HepG2 (cell line): ENCODE measurements at regions of chr7 and their contacts with region 1.

Region 1: DNA sequence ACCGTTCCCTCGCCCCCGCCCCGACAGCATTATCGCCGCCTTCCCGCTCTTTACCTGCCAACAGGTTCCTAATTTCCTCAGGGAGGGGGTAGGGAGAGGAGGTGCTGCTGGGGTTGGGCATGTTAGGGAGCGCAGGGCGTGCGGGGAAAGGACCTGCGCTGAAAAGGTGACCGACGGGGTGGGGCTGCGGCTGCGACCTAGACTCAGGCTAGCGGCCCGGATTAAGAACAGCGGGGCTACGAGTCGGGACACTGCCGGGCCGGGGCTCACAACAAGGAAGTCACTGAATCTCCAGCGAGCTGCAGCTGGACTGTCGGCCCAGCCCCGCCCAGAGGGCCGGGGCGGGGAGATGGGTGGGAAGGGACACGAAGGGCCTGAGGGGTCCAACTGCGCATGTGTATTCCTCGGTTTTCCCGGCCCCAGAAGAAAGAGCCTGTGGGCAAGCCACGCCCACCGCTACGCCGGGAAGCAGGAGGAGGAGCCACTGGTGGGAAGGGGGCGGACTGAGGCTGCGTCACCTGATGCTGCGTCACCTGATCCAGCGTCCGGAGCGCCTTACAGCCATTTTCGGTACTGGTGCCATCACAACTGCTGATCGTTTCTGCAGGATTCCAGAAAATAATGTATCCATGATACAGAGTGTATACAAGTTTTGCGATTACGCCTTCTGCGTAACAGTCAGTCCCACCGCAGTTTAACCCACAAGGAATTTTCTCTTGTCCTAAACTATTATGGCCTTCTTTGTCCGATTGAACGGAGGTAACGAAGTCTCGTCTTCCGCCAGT is at the start of gene SKAP2:
- DNase-seq: peak; percentile 96
- ATAC-seq: peak; percentile 98
- H3K4me3 ChIP-seq: peak within 1 kb of the TSS; percentile 87 to 95 (median 93)
- H3K27ac ChIP-seq: peak within 1 kb of the TSS; percentile 83
- H3K4me1 ChIP-seq: peaks cover 21% of the 10 kb centered on the region
- H3K27me3 ChIP-seq: no peaks in the 10 kb centered on the region; a peak in 1 of 5 replicates
- CTCF ChIP-seq: no peak; the same call in 1 of the 2 replicates
- EP300 ChIP-seq: peak in 1 of 2 experiments; percentile 38; a peak in 1 of 4 replicates
- POLR2A ChIP-seq: peak; percentile 94 to 97
- RAD21 ChIP-seq: no peak
- total RNA-seq, gene SKAP2: 12.9 and 18.8 TPM in 2 replicates

Region 2: GRCh38 chr7:26686448-26686981 is 178.0 kb before region 1 on chr7:
- CTCF ChIA-PET with region 1: no interaction called
- POLR2A ChIA-PET with region 1: interaction called, 3 read pairs
- in situ Hi-C with region 1: no loop called
- intact Hi-C with region 1: loop called (anchors 2 kb)
- DNase-seq: peak; percentile 68
- ATAC-seq: peak; percentile 68
- H3K4me3 ChIP-seq: no peak overlapping the region
- H3K27ac ChIP-seq: peak overlapping the region; percentile 33
- H3K4me1 ChIP-seq: peaks cover 48% of the 10 kb centered on the region
- H3K27me3 ChIP-seq: no peaks in the 10 kb centered on the region
- CTCF ChIP-seq: peak; percentile 58
- EP300 ChIP-seq: no peak
- POLR2A ChIP-seq: no peak
- RAD21 ChIP-seq: no peak

Region 3: GRCh38 chr7:26910221-26910620 is 45.7 kb after region 1 on chr7:
- CTCF ChIA-PET with region 1: no interaction called
- POLR2A ChIA-PET with region 1: no interaction called
- in situ Hi-C with region 1: no loop called
- intact Hi-C with region 1: no loop called
- DNase-seq: peak; percentile 18
- ATAC-seq: peak; percentile 54; the same call in 1 of the 3 replicates
- H3K4me3 ChIP-seq: no peak overlapping the region
- H3K27ac ChIP-seq: no peak overlapping the region
- H3K4me1 ChIP-seq: peaks cover 20% of the 10 kb centered on the region
- H3K27me3 ChIP-seq: no peaks in the 10 kb centered on the region
- CTCF ChIP-seq: no peak
- EP300 ChIP-seq: peak in 1 of 2 experiments; percentile 48; a peak in 1 of 4 replicates
- POLR2A ChIP-seq: no peak
- RAD21 ChIP-seq: no peak

Region 4: GRCh38 chr7:26948617-26949118 is 84.2 kb after region 1 on chr7:
- CTCF ChIA-PET with region 1: no interaction called
- POLR2A ChIA-PET with region 1: interaction called, 3 read pairs
- in situ Hi-C with region 1: no loop called
- intact Hi-C with region 1: loop called (anchors 5 kb)
- DNase-seq: peak; percentile 11
- ATAC-seq: peak; percentile 79
- H3K4me3 ChIP-seq: no peak overlapping the region
- H3K27ac ChIP-seq: no peak overlapping the region
- H3K4me1 ChIP-seq: peaks cover 23% of the 10 kb centered on the region
- H3K27me3 ChIP-seq: peaks cover 0 to 3% of the 10 kb centered on the region in 2 experiments; a peak in 1 of 5 replicates
- CTCF ChIP-seq: no peak
- EP300 ChIP-seq: no peak
- POLR2A ChIP-seq: no peak
- RAD21 ChIP-seq: no peak

Region 5: GRCh38 chr7:27124096-27124901 is 259.8 kb after region 1 on chr7:
- CTCF ChIA-PET with region 1: no interaction called
- POLR2A ChIA-PET with region 1: interaction called, 10 read pairs
- in situ Hi-C with region 1: no loop called
- intact Hi-C with region 1: no loop called
- DNase-seq: no peak
- ATAC-seq: no peak
- H3K4me3 ChIP-seq: no peak overlapping the region; a peak in 1 of 6 replicates
- H3K27ac ChIP-seq: no peak overlapping the region
- H3K4me1 ChIP-seq: peaks cover 81% of the 10 kb centered on the region
- H3K27me3 ChIP-seq: no peaks in the 10 kb centered on the region; a peak in 1 of 5 replicates
- CTCF ChIP-seq: no peak
- EP300 ChIP-seq: no peak
- POLR2A ChIP-seq: no peak
- RAD21 ChIP-seq: no peak

Region 6: GRCh38 chr7:27130540-27131389 is 266.3 kb after region 1 on chr7 and contains the start of gene HOXA4:
- CTCF ChIA-PET with region 1: no interaction called
- POLR2A ChIA-PET with region 1: interaction called, 12 read pairs
- in situ Hi-C with region 1: no loop called
- intact Hi-C with region 1: no loop called
- DNase-seq: peak; percentile 77
- ATAC-seq: peak; percentile 89
- H3K4me3 ChIP-seq: peak within 1 kb of the TSS; percentile 62 to 88 (median 69)
- H3K27ac ChIP-seq: peak within 1 kb of the TSS; percentile 78
- H3K4me1 ChIP-seq: peaks cover 90% of the 10 kb centered on the region
- H3K27me3 ChIP-seq: no peaks in the 10 kb centered on the region
- CTCF ChIP-seq: no peak
- EP300 ChIP-seq: no peak; a peak in 1 of 4 replicates
- POLR2A ChIP-seq: peak; percentile 76 to 77
- RAD21 ChIP-seq: peak; percentile 50; the same call in 1 of the 2 replicates
- total RNA-seq, gene HOXA4: 1.8 and 2.4 TPM in 2 replicates